ENCODE measurements at regions of chr15 and their contacts with region 1.

Region 1: GRCh38 chr15:57561041-57561711 is 30.5 kb upstream of the MYZAP start:
- DNase-seq: peak in 1 of 2 experiments; percentile 73
- H3K4me3 ChIP-seq: no peak overlapping the region
- H3K27ac ChIP-seq: no peak overlapping the region
- H3K4me1 ChIP-seq: peaks cover 1 to 4% (median 2%) of the 10 kb centered on the region in 4 experiments; a peak in 3 of 7 replicates
- H3K27me3 ChIP-seq: no peaks in the 10 kb centered on the region
- CTCF ChIP-seq: peak; percentile 68 to 96 (median 87)
- EP300 ChIP-seq: no peak
- POLR2A ChIP-seq: no peak
- RAD21 ChIP-seq: peak; percentile 81 to 88

Region 2: DNA sequence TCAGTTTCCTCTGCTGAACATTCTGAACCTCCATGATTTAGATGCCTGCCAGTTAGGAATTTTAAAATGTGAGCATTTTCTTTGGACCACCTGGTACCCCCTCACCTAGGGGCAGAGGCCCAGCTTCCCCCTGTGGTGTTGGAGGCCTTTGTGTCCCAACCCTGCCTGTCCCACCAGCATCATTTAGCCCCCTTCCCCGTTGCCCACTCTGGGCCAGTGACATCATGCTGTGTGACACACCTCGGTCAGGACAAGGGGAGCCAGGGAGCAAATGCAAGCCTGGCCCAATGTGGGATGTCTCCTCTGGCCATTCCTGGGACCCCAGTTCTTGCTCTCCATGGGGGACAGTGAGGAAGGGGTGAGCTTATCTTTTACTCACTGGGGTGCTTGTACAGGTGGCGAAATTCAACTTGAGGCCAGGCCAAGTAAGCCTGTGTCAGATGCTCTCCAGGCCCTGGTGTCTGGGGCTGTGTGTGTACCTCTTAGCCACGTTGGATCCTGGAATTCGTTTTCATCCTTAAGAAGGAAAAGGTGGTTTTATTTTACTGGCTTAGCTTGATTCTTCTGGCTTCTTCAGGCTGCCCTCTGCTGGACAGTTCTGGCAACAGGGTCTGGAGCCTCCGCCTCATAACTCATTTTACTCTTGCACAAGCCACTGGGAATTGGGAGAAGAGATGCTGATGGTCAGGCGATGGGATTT is 19.2 kb before region 1 on chr15:
- CTCF ChIA-PET with region 1: interaction called, 34 read pairs
- POLR2A ChIA-PET with region 1: no interaction called
- DNase-seq: peak in 1 of 2 experiments; percentile 83
- H3K4me3 ChIP-seq: no peak overlapping the region
- H3K27ac ChIP-seq: no peak overlapping the region
- H3K4me1 ChIP-seq: 0 out of 7 replicates have a peak, but pooled peaks cover 0 to 1% (median 0%) of the 10 kb centered on the region in 4 experiments
- H3K27me3 ChIP-seq: no peaks in the 10 kb centered on the region
- CTCF ChIP-seq: peak; percentile 63 to 85 (median 70)
- EP300 ChIP-seq: no peak
- POLR2A ChIP-seq: no peak
- RAD21 ChIP-seq: peak; percentile 56 to 65

Region 3: GRCh38 chr15:57591646-57592367 is 30.6 kb after region 1 on chr15 and contains the start of gene MYZAP:
- CTCF ChIA-PET with region 1: interaction called, 10 read pairs
- POLR2A ChIA-PET with region 1: no interaction called
- DNase-seq: peak in 1 of 2 experiments; percentile 74
- H3K4me3 ChIP-seq: peak within 1 kb of the TSS; percentile 64 to 80 (median 73)
- H3K27ac ChIP-seq: no peak within 1 kb of the TSS
- H3K4me1 ChIP-seq: peaks cover 4 to 7% (median 4%) of the 10 kb centered on the region in 4 experiments; a peak in 6 of 7 replicates
- H3K27me3 ChIP-seq: peaks cover 0 to 18% (median 10%) of the 10 kb centered on the region in 4 experiments; a peak in 4 of 7 replicates
- CTCF ChIP-seq: no peak
- EP300 ChIP-seq: no peak
- POLR2A ChIP-seq: no peak
- RAD21 ChIP-seq: no peak
- total RNA-seq, gene MYZAP: 0.65 and 0.94 TPM in 2 replicates

Region 4: DNA sequence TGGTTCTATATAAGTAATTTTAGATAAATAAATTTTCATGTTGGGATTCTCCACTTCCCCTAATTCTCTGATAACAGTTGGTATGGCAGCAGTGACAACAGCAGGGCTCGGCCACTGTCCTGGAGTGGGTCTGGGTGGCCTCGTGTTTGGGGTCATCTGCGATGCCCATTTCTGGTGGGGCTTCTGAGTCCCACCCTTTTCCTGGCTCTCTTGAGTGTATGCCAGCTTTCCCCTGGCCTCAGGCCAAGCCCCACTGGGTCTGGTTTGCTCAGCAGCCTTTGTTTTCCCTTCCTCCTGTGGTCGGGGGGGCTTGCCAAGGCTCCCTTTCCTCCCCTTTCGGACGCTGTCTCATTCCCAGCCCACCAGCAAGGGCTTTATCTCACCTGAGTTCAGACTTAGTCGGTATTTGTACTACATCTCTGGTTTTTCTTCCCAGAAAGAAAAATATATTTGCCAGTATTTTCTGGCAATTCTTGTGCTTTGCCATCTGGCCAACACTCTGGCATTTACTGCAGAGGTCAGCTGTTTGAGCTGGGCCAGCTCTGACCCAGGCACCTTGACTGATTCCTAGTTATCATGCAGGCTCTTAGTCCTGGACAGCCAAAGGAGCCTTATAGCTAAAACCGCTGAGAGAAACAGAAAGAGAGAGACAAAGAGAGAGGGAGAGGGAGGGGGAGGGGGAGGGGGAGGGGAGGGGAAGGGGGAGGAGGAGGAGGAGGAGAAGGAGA is 65.7 kb after region 1 on chr15:
- CTCF ChIA-PET with region 1: interaction called, 25 read pairs
- POLR2A ChIA-PET with region 1: no interaction called
- DNase-seq: no peak
- H3K4me3 ChIP-seq: no peak overlapping the region
- H3K27ac ChIP-seq: no peak overlapping the region
- H3K4me1 ChIP-seq: 0 out of 7 replicates have a peak, but pooled peaks cover 0 to 3% (median 0%) of the 10 kb centered on the region in 4 experiments
- H3K27me3 ChIP-seq: no peaks in the 10 kb centered on the region
- CTCF ChIP-seq: no peak
- EP300 ChIP-seq: no peak
- POLR2A ChIP-seq: no peak
- RAD21 ChIP-seq: no peak

Region 5: GRCh38 chr15:57640935-57641682 is 79.9 kb after region 1 on chr15:
- CTCF ChIA-PET with region 1: interaction called, 25 read pairs
- POLR2A ChIA-PET with region 1: no interaction called
- DNase-seq: no peak
- H3K4me3 ChIP-seq: no peak overlapping the region
- H3K27ac ChIP-seq: no peak overlapping the region
- H3K4me1 ChIP-seq: no peaks in the 10 kb centered on the region
- H3K27me3 ChIP-seq: peaks cover 0 to 3% (median 0%) of the 10 kb centered on the region in 4 experiments; a peak in 2 of 7 replicates
- CTCF ChIP-seq: peak; percentile 50 to 61 (median 59)
- EP300 ChIP-seq: no peak
- POLR2A ChIP-seq: no peak
- RAD21 ChIP-seq: peak; percentile 22 to 45; a peak in 3 of 4 replicates